ENCODE measurements at regions of chr20 and their contacts with region 1.

Region 1: GRCh38 chr20:32277361-32278198 is at the start of gene KIF3B:
- DNase-seq: peak; percentile 75
- H3K4me3 ChIP-seq: peak within 1 kb of the TSS; percentile 63 to 99 (median 82)
- H3K27ac ChIP-seq: peak within 1 kb of the TSS; percentile 71
- H3K4me1 ChIP-seq: peaks cover 13% of the 10 kb centered on the region
- H3K27me3 ChIP-seq: peaks cover 3 to 7% of the 10 kb centered on the region in 2 experiments
- CTCF ChIP-seq: no peak
- POLR2A ChIP-seq: no peak
- total RNA-seq, gene KIF3B: 25.1 and 26.3 TPM in 2 replicates

Region 2: DNA sequence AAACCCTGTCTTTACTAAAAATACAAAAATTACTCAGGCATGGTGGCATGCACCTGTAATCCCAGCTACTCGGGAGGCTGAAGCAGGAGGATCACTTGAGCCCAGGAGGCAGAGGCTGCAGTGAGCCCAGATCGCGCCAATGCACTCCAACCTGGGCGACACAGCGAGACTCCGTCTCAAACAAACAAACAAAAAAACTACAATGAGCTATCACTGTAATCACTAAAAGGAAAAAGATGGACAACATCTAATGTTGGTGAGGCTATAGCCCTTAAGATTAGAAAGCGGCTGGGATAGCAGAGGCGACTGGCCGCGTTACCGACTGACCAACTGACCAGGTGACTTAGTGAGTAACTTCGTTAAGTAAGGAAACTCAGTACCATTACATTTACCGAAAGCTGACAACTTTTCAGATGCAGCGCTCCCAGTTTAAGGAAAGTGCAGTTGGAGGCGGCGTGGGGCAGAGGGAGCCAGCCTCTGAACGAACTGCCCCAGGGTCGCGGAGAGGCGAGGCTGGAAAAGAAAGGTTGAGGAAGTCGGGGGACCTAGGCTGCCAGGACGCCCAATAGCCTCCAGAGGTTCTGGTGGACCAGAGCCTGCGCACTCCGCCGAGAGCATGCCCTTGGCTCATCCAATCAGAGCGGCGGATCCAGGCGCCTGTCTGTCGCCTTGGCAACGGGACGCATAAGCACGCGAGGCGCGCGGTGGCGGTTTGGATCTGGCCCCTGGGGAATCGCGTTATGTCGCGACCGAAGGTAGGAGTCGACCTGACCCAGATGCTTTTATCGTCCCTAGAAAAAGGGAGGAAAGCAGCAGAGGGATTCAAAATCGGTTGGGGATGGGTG is 398.2 kb before region 1 on chr20:
- CTCF ChIA-PET with region 1: no interaction called
- POLR2A ChIA-PET with region 1: no interaction called
- dilution Hi-C with region 1: no loop called
- intact Hi-C with region 1: no loop called
- DNase-seq: peak; percentile 95
- H3K4me3 ChIP-seq: peak overlapping the region; percentile 11 to 49 (median 47)
- H3K27ac ChIP-seq: peak overlapping the region; percentile 34
- H3K4me1 ChIP-seq: no peaks in the 10 kb centered on the region
- H3K27me3 ChIP-seq: peaks cover 4 to 12% of the 10 kb centered on the region in 2 experiments
- CTCF ChIP-seq: no peak
- POLR2A ChIP-seq: peak; percentile 27

Region 3: GRCh38 chr20:32315891-32316290 is 38.3 kb after region 1 on chr20:
- CTCF ChIA-PET with region 1: no interaction called
- POLR2A ChIA-PET with region 1: no interaction called
- dilution Hi-C with region 1: no loop called
- intact Hi-C with region 1: loop called (anchors 2 kb)
- DNase-seq: no peak
- H3K4me3 ChIP-seq: no peak overlapping the region
- H3K27ac ChIP-seq: no peak overlapping the region
- H3K4me1 ChIP-seq: peaks cover 3% of the 10 kb centered on the region
- H3K27me3 ChIP-seq: no peaks in the 10 kb centered on the region
- CTCF ChIP-seq: no peak
- POLR2A ChIP-seq: no peak

Region 4: DNA sequence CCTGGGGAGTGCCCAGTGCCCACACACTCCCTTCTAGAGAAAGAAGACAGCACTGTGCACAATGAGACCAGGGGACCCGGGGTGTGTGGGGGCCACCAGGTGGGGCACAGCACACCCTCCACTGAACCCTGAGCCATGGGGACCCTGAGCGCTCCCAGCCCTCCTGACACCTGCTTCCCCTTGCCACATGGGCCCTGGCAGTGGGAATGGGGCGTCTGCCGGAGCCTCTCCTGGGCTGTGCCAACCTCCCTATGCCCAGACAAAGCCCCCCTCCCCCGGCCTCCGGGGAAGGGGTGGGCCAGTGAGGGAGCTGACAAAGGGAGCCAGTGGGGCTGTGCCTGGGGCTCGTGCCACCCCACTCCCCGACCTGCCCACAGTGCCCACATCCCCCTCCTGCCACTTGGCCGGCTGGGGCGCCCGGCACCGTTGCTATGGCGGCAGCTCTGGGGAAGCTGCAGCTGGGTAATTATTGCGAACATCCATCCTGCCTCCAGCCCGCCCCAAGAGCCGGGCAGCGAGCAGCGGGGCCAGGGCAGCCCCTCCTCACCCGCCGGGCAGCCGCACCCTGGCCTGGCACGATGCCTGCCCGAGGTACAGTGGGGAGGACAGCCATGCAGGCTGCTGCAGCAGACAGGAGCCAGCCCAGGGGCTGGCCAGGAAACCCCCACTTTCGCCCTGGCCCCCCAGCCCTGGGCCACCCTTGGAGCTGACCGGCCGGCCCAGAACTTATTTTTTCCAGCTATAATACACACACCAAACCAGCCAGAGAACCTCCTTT is 349.5 kb after region 1 on chr20:
- CTCF ChIA-PET with region 1: no interaction called
- POLR2A ChIA-PET with region 1: no interaction called
- dilution Hi-C with region 1: no loop called
- intact Hi-C with region 1: no loop called
- DNase-seq: no peak
- H3K4me3 ChIP-seq: no peak overlapping the region
- H3K27ac ChIP-seq: no peak overlapping the region
- H3K4me1 ChIP-seq: no peaks in the 10 kb centered on the region
- H3K27me3 ChIP-seq: peaks cover 0 to 6% of the 10 kb centered on the region in 2 experiments
- CTCF ChIP-seq: no peak
- POLR2A ChIP-seq: no peak

Measured in endothelial cell of umbilical vein (primary cell).